Activated CD4-positive, alpha-beta T cell treated with anti-CD3 and anti-CD28 coated beads for 36 hours (primary cell): ENCODE measurements at regions of chr11 and their contacts with region 1.

Region 1: DNA sequence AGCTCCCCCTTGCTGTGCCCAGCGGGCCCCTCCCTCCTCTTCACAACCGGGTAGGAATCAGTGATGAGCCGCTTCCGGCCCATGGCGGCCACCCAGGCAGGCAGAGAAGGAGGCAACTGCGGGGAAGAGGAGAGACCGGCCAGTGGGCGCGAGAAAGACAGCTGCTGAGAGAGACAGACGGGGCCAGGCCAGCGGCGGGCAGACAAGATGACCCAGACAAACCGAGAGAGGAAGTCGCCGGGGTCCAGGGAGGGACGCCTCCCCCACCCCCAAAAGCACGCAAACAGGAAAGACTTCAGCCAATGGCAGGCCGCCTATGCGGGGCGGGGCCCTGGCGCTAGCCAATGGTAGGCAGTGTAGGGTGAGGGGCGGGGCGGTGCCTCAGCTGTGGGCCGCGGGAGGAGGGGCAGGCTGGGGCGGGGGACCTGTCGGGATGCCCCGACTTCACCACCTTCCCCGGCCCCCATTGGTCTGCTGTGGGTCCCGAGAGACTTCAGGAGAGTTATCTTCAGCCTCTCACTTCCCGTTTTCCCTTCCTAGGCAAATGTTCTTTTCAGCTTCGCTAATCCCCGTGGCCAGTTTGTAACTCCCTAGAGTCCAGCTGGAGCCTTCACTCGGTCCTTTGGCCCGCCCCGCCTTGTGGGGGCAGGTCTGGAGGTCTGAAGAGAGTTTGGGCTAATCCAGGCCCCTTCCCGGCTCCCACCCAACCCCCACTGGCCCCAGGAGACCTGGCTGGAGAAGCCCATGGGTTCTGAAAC is at the start of gene POLD4:
- DNase-seq: peak; percentile 98
- ATAC-seq: peak; percentile 91
- H3K4me3 Mint-ChIP-seq: peak within 1 kb of the TSS; percentile 95
- H3K27ac Mint-ChIP-seq: peak within 1 kb of the TSS; percentile 99
- H3K4me1 Mint-ChIP-seq: peaks cover 49% of the 10 kb centered on the region
- H3K27me3 Mint-ChIP-seq: no peaks in the 10 kb centered on the region
- total RNA-seq, gene POLD4: 31.3 to 37.5 TPM

Region 2: GRCh38 chr11:66922551-66922950 is 430.9 kb before region 1 on chr11:
- CTCF ChIA-PET with region 1: no interaction called
- POLR2A ChIA-PET with region 1: no interaction called
- intact Hi-C with region 1: no loop called
- DNase-seq: no peak
- ATAC-seq: no peak
- H3K4me3 Mint-ChIP-seq: no peak overlapping the region
- H3K27ac Mint-ChIP-seq: no peak overlapping the region
- H3K4me1 Mint-ChIP-seq: no peaks in the 10 kb centered on the region
- H3K27me3 Mint-ChIP-seq: no peaks in the 10 kb centered on the region

Region 3: GRCh38 chr11:67265633-67266423 is 87.7 kb before region 1 on chr11:
- CTCF ChIA-PET with region 1: interaction called, 7 read pairs
- POLR2A ChIA-PET with region 1: interaction called, 3 read pairs
- intact Hi-C with region 1: loop called in 1 of 2 experiments (anchors 1 kb)
- DNase-seq: peak; percentile 87
- ATAC-seq: peak; percentile 18
- H3K4me3 Mint-ChIP-seq: peak overlapping the region; percentile 72
- H3K27ac Mint-ChIP-seq: peak overlapping the region; percentile 90
- H3K4me1 Mint-ChIP-seq: peaks cover 78% of the 10 kb centered on the region
- H3K27me3 Mint-ChIP-seq: no peaks in the 10 kb centered on the region

Region 4: DNA sequence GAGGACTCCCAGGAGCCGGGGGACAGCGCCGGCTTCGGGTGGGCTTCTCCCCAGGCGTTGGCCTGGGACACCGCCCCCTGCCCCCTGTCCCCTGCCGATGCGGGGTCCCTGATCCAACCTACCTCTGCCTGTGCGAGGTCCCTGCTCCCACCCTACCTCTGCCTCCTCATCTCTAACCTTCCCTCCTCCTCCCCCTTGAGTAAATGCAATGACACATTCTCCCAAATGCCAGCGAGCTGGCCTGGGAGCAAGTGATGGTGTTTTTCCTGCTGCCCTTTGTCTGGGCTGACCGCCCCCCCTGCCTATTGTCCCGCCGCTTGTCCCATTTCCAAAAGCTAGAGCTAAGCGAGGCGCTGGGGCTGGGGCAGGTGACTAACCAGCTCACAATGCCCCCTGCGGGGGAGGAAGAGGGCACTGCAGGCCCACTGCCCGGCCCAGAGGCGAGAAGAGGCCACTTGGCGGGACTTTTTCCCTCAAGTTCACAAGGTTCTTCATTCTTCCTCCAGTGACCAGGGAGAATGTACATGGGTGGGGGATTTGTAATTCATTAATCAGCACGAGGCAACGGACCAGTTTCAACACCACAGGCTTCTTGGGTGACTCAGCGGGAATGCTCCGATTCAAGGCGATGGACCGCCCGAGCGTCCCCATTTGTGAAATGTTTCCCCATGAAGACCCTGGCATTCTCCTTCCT is 20.6 kb after region 1 on chr11:
- CTCF ChIA-PET with region 1: interaction called, 445 read pairs
- POLR2A ChIA-PET with region 1: no interaction called
- intact Hi-C with region 1: no loop called
- DNase-seq: peak; percentile 69
- ATAC-seq: peak; percentile 51
- H3K4me3 Mint-ChIP-seq: peak overlapping the region; percentile 71
- H3K27ac Mint-ChIP-seq: no peak overlapping the region
- H3K4me1 Mint-ChIP-seq: peaks cover 30% of the 10 kb centered on the region
- H3K27me3 Mint-ChIP-seq: peaks cover 32% of the 10 kb centered on the region

Region 5: GRCh38 chr11:67428052-67428914 is 74.8 kb after region 1 on chr11 and contains the start of gene RPS6KB2:
- CTCF ChIA-PET with region 1: interaction called, 4 read pairs
- POLR2A ChIA-PET with region 1: no interaction called
- intact Hi-C with region 1: loop called in 1 of 2 experiments (anchors 1 kb)
- DNase-seq: peak; percentile 99
- ATAC-seq: peak; percentile 81
- H3K4me3 Mint-ChIP-seq: peak within 1 kb of the TSS; percentile 90
- H3K27ac Mint-ChIP-seq: peak within 1 kb of the TSS; percentile 98
- H3K4me1 Mint-ChIP-seq: peaks cover 37% of the 10 kb centered on the region
- H3K27me3 Mint-ChIP-seq: no peaks in the 10 kb centered on the region
- total RNA-seq, gene RPS6KB2: 53.4 to 57.2 TPM

Region 6: DNA sequence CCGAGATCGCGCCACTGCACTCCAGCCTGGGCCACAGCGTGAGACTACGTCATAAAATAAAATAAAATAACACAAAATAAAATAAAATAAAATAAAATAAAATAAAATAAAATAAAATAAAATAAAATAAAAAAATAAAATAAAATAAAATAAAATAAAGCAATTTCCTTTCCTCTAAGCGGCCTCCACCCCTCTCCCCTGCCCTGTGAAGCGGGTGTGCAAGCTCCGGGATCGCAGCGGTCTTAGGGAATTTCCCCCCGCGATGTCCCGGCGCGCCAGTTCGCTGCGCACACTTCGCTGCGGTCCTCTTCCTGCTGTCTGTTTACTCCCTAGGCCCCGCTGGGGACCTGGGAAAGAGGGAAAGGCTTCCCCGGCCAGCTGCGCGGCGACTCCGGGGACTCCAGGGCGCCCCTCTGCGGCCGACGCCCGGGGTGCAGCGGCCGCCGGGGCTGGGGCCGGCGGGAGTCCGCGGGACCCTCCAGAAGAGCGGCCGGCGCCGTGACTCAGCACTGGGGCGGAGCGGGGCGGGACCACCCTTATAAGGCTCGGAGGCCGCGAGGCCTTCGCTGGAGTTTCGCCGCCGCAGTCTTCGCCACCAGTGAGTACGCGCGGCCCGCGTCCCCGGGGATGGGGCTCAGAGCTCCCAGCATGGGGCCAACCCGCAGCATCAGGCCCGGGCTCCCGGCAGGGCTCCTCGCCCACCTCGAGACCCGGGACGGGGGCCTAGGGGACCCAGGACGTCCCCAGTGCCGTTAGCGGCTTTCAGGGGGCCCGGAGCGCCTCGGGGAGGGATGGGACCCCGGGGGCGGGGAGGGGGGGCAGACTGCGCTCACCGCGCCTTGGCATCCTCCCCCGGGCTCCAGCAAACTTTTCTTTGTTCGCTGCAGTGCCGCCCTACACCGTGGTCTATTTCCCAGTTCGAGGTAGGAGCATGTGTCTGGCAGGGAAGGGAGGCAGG is 230.0 kb after region 1 on chr11 and contains the start of gene GSTP1:
- CTCF ChIA-PET with region 1: interaction called, 4 read pairs
- POLR2A ChIA-PET with region 1: no interaction called
- intact Hi-C with region 1: loop called in 1 of 2 experiments (anchors 5 kb)
- DNase-seq: peak; percentile 90
- ATAC-seq: peak; percentile 85
- H3K4me3 Mint-ChIP-seq: peak within 1 kb of the TSS; percentile 89
- H3K27ac Mint-ChIP-seq: peak within 1 kb of the TSS; percentile 94
- H3K4me1 Mint-ChIP-seq: peaks cover 52% of the 10 kb centered on the region
- H3K27me3 Mint-ChIP-seq: peaks cover 10% of the 10 kb centered on the region
- total RNA-seq, gene GSTP1: 376 to 463 TPM

Region 7: DNA sequence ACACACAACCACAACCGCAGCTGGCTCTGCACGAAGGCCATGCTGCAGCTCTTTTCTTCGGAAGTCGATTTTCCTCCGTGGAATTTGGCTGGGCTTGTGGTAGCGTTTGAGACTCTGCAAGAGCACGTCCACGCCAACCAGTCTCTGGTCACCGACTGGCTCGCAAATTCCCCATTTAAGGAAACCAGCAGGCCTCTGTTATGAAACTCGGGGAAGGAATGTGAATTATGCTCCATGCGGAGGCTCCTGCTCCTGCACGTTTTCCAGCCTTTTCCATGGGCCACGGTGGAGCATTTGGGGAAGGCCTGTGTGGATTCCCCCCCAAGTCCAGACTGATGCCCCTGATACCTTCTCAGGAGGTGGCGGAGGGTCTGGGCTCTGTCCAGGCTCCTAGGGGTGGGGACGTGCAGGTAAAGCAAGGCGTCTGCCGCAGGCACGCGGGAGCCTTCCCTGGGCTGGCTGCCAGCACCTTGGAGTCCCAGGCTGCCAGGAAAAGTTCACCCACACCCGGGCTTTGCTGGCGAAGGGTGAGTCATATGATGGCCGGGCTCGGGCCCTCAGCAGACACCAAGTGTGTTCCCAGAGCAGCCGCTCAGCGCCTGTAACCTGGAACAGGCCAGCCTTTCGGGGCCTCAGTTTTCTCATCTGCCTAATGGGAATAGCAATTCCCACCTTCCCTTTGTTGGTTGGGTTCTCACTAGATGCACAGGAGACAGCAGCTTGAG is 1000.8 kb after region 1 on chr11:
- CTCF ChIA-PET with region 1: no interaction called
- POLR2A ChIA-PET with region 1: no interaction called
- intact Hi-C with region 1: no loop called
- DNase-seq: no peak
- ATAC-seq: no peak
- H3K4me3 Mint-ChIP-seq: no peak overlapping the region
- H3K27ac Mint-ChIP-seq: no peak overlapping the region
- H3K4me1 Mint-ChIP-seq: no peaks in the 10 kb centered on the region
- H3K27me3 Mint-ChIP-seq: no peaks in the 10 kb centered on the region